GM10248 (cell line): ENCODE measurements at regions of chr1 and their contacts with region 1.

Region 1: GRCh38 chr1:152869808-152870419 is 8.2 kb upstream of the SMCP start:
- DNase-seq: peak; percentile 77
- CTCF ChIP-seq: peak; percentile 85

Region 2: GRCh38 chr1:152836870-152837269 is 33.0 kb before region 1 on chr1:
- CTCF ChIA-PET with region 1: no interaction called
- POLR2A ChIA-PET with region 1: no interaction called
- DNase-seq: no peak
- CTCF ChIP-seq: no peak

Region 3: GRCh38 chr1:152902636-152903035 is 32.7 kb after region 1 on chr1:
- CTCF ChIA-PET with region 1: interaction called, 48 read pairs
- POLR2A ChIA-PET with region 1: no interaction called
- DNase-seq: no peak
- CTCF ChIP-seq: no peak

Region 4: DNA sequence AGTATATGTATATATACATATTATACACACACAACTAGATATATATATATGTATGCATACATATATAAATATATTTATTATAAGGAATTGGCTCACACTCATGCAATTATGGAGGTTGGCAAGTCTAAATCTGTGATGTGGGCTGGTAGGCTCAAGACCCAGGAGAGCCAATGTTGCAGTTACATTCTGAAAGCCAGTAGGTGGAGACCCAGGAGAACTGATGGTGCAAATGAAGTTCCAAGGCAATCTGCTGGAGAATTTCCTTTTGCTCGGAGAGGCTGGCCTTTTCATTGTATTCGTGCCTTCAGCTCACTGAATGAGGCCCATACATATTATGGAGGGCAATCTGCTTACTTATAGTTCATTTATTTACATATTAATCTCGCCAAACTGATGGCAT is 47.9 kb after region 1 on chr1:
- CTCF ChIA-PET with region 1: interaction called, 131 read pairs
- POLR2A ChIA-PET with region 1: no interaction called
- DNase-seq: no peak
- CTCF ChIP-seq: peak; percentile 23

Region 5: GRCh38 chr1:152933196-152933595 is 63.3 kb after region 1 on chr1:
- CTCF ChIA-PET with region 1: interaction called, 131 read pairs
- POLR2A ChIA-PET with region 1: no interaction called
- DNase-seq: no peak
- CTCF ChIP-seq: no peak

Region 6: DNA sequence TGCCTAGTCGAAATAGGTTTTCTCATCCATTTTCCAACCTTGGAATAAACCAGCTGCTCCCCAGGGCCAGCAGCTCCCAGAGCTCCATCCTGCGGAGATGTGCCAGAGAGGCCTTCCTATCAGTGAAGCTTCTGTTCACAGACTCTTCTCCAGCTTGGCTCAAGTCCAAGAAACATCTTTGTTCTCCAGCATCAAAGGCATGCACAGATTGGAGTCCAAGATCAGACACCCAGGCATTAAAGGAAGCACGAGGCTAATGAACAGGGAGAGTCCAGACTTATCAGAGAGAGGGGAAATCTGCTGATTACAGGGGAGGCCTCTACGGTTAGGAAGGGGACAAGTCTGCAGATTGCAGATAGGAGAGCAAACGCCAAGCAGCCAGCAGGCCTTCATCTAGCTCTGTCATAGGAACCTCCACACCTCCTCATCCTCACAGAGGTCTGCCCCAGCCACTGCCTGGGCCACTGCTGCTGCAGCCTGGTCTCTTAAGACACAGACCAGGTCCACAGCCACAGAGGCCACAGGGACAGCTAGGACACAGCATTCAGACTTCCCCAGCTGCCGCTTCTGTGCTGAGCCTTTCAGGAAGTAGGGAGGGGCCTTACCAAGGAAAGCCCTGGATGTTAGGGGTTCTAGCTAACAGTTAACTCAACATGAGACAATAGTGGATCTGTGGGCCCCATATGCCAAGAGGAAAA is 350.8 kb after region 1 on chr1:
- CTCF ChIA-PET with region 1: interaction called, 15 read pairs
- POLR2A ChIA-PET with region 1: no interaction called
- DNase-seq: no peak
- CTCF ChIP-seq: no peak